CD4-positive, alpha-beta T cell (primary cell): ENCODE measurements at regions of chr5 and their contacts with region 1.

Region 1: DNA sequence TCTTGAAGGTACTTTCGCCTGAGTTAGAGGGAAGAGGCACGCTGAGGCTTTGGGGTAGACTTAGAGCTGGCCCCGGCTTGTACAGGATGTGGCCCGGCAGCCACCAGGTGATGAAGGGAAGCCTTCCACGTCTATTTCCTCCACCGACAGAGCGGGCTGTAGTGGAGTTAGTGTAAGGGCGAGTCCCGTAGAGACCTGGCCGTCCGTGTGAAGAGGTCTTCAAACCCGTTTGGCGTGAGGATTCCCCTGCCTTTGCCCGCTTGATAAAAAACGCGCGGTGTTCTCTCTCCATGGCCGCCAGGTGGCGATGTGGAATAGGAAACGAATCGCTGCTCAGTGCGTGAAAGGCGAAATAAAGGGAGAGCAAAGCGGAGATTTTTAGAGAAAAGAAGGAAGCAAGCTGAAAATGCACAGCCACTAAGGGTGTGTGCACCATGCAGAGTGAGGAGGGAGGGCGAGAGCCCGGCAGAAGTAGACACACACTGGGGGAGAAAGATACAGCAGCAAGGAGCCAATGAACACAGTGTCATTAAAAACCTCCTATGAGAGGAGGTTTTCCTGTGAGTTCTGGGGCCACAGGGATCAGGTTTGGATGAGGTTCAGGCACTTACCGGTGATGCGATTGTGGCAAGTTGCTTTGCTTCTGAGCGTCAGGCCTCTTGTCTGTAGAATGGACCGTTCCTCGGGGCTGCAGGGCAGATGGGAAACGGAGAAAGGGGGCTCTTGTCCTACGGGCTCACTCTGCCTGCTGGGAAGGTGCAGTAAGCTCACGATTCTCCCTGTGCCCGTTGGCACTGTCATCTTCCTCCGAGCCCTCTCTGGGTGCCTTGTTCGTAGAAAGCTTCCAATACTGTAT is 34.2 kb downstream of the STC2 start:
- DNase-seq: peak; percentile 36 to 76 (median 51)
- ATAC-seq: peak; percentile 71
- H3K4me3 ChIP-seq: peak overlapping the region; percentile 26
- H3K4me3 Mint-ChIP-seq: peak overlapping the region; percentile 34
- H3K27ac ChIP-seq: no peak overlapping the region
- H3K27ac Mint-ChIP-seq: no peak overlapping the region
- H3K4me1 ChIP-seq: peaks cover 14% of the 10 kb centered on the region
- H3K4me1 Mint-ChIP-seq: peaks cover 13% of the 10 kb centered on the region
- H3K27me3 ChIP-seq: peaks cover 35 to 39% of the 10 kb centered on the region in 2 experiments
- H3K27me3 Mint-ChIP-seq: peaks cover 64% of the 10 kb centered on the region
- CTCF ChIP-seq: peak; percentile 76

Region 2: GRCh38 chr5:173331956-173332479 is 38.0 kb after region 1 on chr5:
- CTCF ChIA-PET with region 1: no interaction called
- POLR2A ChIA-PET with region 1: no interaction called
- intact Hi-C with region 1: loop called in 1 of 2 experiments (anchors 2 kb)
- DNase-seq: peak; percentile 36 to 81 (median 54)
- ATAC-seq: peak; percentile 98
- H3K4me3 ChIP-seq: no peak overlapping the region
- H3K4me3 Mint-ChIP-seq: no peak overlapping the region
- H3K27ac ChIP-seq: no peak overlapping the region
- H3K27ac Mint-ChIP-seq: no peak overlapping the region
- H3K4me1 ChIP-seq: peaks cover 23% of the 10 kb centered on the region
- H3K4me1 Mint-ChIP-seq: peaks cover 20% of the 10 kb centered on the region
- H3K27me3 ChIP-seq: peaks cover 40 to 45% of the 10 kb centered on the region in 2 experiments
- H3K27me3 Mint-ChIP-seq: peaks cover 76% of the 10 kb centered on the region
- CTCF ChIP-seq: peak; percentile 26

Region 3: DNA sequence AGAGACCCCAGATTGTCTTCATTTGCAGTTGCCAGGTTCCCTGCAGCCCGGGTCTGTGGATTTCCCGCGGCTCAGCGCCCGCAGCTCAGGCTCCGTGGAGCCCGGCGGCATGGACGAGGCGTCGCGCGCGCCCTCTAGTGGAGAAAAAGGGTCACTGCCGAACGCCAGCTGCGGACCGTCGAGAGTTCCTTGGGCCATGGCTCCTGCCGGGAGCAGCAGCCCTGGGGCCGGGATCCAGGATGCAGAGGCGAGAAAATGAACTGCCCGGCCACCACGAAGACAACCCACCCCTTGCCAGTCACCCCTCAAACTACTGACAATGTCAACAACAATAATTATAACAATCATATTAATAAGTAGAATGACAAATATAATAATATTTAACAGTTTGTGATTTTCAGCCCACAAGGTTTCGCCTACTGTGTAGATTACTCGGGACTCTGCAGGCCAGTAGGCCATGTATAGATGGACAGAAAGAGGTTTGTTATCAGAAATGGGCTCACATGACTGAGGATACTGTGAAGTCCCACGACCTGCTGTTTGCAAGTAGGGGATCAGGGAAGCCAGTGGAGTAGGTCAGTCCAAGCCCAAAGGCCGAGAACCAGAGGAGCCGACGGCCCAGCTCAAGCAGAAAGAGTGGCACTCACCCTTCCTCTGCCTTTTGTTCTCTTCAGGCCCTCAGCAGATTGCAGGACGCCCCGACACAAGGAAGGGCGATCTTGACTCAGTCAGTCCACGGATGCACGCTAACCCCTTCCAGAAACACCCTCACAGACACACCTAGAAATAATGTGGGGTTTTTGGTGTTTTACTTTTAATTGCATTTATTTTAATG is 279.3 kb after region 1 on chr5:
- CTCF ChIA-PET with region 1: no interaction called
- POLR2A ChIA-PET with region 1: no interaction called
- intact Hi-C with region 1: loop called (anchors 1 to 5 kb)
- DNase-seq: peak; percentile 35 to 76 (median 52)
- ATAC-seq: peak; percentile 73
- H3K4me3 ChIP-seq: no peak overlapping the region
- H3K4me3 Mint-ChIP-seq: no peak overlapping the region
- H3K27ac ChIP-seq: no peak overlapping the region
- H3K27ac Mint-ChIP-seq: no peak overlapping the region
- H3K4me1 ChIP-seq: peaks cover 8% of the 10 kb centered on the region
- H3K4me1 Mint-ChIP-seq: peaks cover 7% of the 10 kb centered on the region
- H3K27me3 ChIP-seq: peaks cover 8 to 16% of the 10 kb centered on the region in 2 experiments
- H3K27me3 Mint-ChIP-seq: peaks cover 16% of the 10 kb centered on the region
- CTCF ChIP-seq: peak; percentile 93

Region 4: DNA sequence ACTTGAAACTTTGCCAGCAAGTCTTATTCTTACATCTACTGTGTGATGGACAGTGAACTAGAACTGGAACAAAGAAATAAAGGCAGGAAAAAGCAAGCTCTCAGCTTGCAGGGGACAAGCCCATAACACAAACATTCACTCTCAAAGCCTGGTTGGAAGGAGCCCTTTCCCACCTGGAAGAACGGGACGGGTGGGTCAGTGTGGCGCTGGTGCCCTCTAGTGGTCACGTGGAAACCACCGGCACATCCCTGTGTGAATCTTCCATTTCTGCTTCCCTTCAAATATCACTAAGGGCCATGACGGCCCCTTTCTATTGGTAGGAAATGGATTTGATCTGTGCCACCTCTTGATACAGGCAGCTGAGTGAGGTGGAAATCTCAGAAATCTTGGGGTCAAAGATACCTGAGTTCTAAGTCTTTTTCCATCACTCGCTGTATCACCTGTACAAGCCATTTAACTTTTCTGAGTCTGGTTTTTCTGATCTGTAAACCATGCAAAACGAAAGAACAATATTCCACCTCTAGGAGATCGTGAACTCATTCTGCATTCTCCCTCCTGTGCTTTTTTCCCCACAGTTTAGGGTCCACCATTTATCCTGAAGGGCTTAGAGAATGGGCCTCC is 1641.9 kb after region 1 on chr5:
- CTCF ChIA-PET with region 1: no interaction called
- POLR2A ChIA-PET with region 1: no interaction called
- intact Hi-C with region 1: loop called in 1 of 2 experiments (anchors 10 kb)
- DNase-seq: peak; percentile 3 to 48 (median 16)
- ATAC-seq: no peak
- H3K4me3 ChIP-seq: no peak overlapping the region
- H3K4me3 Mint-ChIP-seq: no peak overlapping the region
- H3K27ac ChIP-seq: no peak overlapping the region
- H3K27ac Mint-ChIP-seq: no peak overlapping the region
- H3K4me1 ChIP-seq: no peaks in the 10 kb centered on the region
- H3K4me1 Mint-ChIP-seq: no peaks in the 10 kb centered on the region
- H3K27me3 ChIP-seq: peaks cover 2 to 4% of the 10 kb centered on the region in 2 experiments
- H3K27me3 Mint-ChIP-seq: peaks cover 33% of the 10 kb centered on the region
- CTCF ChIP-seq: peak; percentile 79